HepG2 (cell line): ENCODE measurements at regions of chr6 and their contacts with region 1.

Region 1: GRCh38 chr6:17156112-17156921 is 54.5 kb downstream of the STMND1 start:
- DNase-seq: peak; percentile 75
- ATAC-seq: peak; percentile 70
- H3K4me3 ChIP-seq: no peak overlapping the region
- H3K27ac ChIP-seq: no peak overlapping the region
- H3K4me1 ChIP-seq: peaks cover 23% of the 10 kb centered on the region
- H3K27me3 ChIP-seq: no peaks in the 10 kb centered on the region; a peak in 1 of 5 replicates
- CTCF ChIP-seq: peak; percentile 85
- EP300 ChIP-seq: no peak
- POLR2A ChIP-seq: no peak
- RAD21 ChIP-seq: peak; percentile 82

Region 2: GRCh38 chr6:17803409-17803808 is 647.1 kb after region 1 on chr6:
- CTCF ChIA-PET with region 1: interaction called, 13 read pairs
- POLR2A ChIA-PET with region 1: no interaction called
- in situ Hi-C with region 1: loop called (anchors 5 kb)
- intact Hi-C with region 1: loop called (anchors 1 kb)
- DNase-seq: peak; percentile 45
- ATAC-seq: peak; percentile 58
- H3K4me3 ChIP-seq: no peak overlapping the region
- H3K27ac ChIP-seq: no peak overlapping the region
- H3K4me1 ChIP-seq: peaks cover 24% of the 10 kb centered on the region
- H3K27me3 ChIP-seq: no peaks in the 10 kb centered on the region
- CTCF ChIP-seq: no peak
- EP300 ChIP-seq: no peak
- POLR2A ChIP-seq: no peak
- RAD21 ChIP-seq: no peak

Region 3: GRCh38 chr6:17816921-17817611 is 660.7 kb after region 1 on chr6:
- CTCF ChIA-PET with region 1: interaction called, 11 read pairs
- POLR2A ChIA-PET with region 1: no interaction called
- in situ Hi-C with region 1: no loop called
- intact Hi-C with region 1: no loop called
- DNase-seq: peak; percentile 75
- ATAC-seq: peak; percentile 66
- H3K4me3 ChIP-seq: no peak overlapping the region
- H3K27ac ChIP-seq: no peak overlapping the region
- H3K4me1 ChIP-seq: peaks cover 14% of the 10 kb centered on the region
- H3K27me3 ChIP-seq: no peaks in the 10 kb centered on the region
- CTCF ChIP-seq: no peak; the same call in 1 of the 2 replicates
- EP300 ChIP-seq: no peak
- POLR2A ChIP-seq: no peak
- RAD21 ChIP-seq: no peak

Region 4: GRCh38 chr6:18323935-18324705 is 1167.8 kb after region 1 on chr6:
- CTCF ChIA-PET with region 1: no interaction called
- POLR2A ChIA-PET with region 1: no interaction called
- in situ Hi-C with region 1: loop called (anchors 25 kb)
- intact Hi-C with region 1: loop called (anchors 2 kb)
- DNase-seq: peak; percentile 54
- ATAC-seq: peak; percentile 90
- H3K4me3 ChIP-seq: no peak overlapping the region
- H3K27ac ChIP-seq: no peak overlapping the region
- H3K4me1 ChIP-seq: no peaks in the 10 kb centered on the region
- H3K27me3 ChIP-seq: no peaks in the 10 kb centered on the region
- CTCF ChIP-seq: peak; percentile 83
- EP300 ChIP-seq: no peak
- POLR2A ChIP-seq: no peak
- RAD21 ChIP-seq: peak; percentile 82